Lower leg skin (tissue), 4 donors: ENCODE measurements at regions of chr6 and their contacts with region 1.

Region 1: GRCh38 chr6:123802697-123803496 is 768 bp upstream of the NKAIN2 start:
- DNase-seq: peak; percentile 55 to 92
- H3K4me3 ChIP-seq: peak overlapping the region; percentile 33
- CTCF ChIP-seq: no peak
- POLR2A ChIP-seq: no peak

Region 2: DNA sequence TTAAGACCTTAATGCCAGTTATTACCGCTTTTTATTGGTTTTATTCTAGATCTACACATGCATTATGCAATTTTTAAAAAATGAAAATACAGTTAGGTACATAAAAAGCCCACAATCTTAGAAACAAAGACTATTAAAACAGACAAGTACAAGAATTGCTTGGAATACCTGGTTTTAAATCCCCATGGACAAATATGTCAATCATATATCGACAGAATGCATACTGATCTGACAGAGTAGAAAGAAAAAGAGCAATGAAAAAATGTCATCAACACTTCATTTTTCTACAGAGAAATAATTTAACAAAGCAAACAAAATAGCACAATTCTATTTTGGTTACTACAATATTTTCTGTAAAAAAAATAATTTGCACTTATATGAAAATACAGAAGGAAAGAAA is 305.9 kb before region 1 on chr6:
- intact Hi-C with region 1: no loop called
- DNase-seq: no peak
- H3K4me3 ChIP-seq: no peak overlapping the region
- CTCF ChIP-seq: no peak
- POLR2A ChIP-seq: no peak

Region 3: GRCh38 chr6:123788319-123788718 is 14.6 kb before region 1 on chr6:
- intact Hi-C with region 1: no loop called
- DNase-seq: no peak
- H3K4me3 ChIP-seq: no peak overlapping the region
- CTCF ChIP-seq: no peak
- POLR2A ChIP-seq: no peak

Region 4: GRCh38 chr6:124090491-124090890 is 287.6 kb after region 1 on chr6:
- intact Hi-C with region 1: no loop called
- DNase-seq: no peak
- H3K4me3 ChIP-seq: no peak overlapping the region
- CTCF ChIP-seq: no peak
- POLR2A ChIP-seq: no peak

Region 5: DNA sequence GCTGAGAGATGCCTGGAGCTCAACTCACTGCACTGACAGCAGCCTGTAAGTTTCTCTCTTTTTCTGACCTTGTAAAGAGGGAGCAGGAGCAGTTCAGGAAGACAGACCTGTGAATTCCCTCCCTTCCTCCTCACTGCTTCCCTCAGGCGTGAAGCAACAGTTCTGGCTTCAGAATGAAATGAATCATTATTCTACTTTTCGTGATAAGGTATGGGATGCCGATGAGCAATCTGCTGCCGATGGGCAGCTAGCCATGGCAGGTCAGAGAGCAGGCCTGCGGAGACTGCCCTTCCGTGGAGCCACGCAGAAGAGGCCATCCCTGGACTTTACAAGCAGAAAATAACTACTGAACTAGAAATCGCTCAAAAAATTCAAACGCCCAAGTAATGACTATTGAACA is 732.9 kb after region 1 on chr6:
- intact Hi-C with region 1: no loop called
- DNase-seq: no peak
- H3K4me3 ChIP-seq: no peak overlapping the region
- CTCF ChIP-seq: no peak
- POLR2A ChIP-seq: no peak

Region 6: GRCh38 chr6:124854338-124854922 is 1051.5 kb after region 1 on chr6:
- intact Hi-C with region 1: loop called (anchors 10 kb)
- DNase-seq: no peak
- H3K4me3 ChIP-seq: no peak overlapping the region
- CTCF ChIP-seq: no peak
- POLR2A ChIP-seq: no peak